MCF 10A (cell line): ENCODE measurements at regions of chr2 and their contacts with region 1.

Region 1: DNA sequence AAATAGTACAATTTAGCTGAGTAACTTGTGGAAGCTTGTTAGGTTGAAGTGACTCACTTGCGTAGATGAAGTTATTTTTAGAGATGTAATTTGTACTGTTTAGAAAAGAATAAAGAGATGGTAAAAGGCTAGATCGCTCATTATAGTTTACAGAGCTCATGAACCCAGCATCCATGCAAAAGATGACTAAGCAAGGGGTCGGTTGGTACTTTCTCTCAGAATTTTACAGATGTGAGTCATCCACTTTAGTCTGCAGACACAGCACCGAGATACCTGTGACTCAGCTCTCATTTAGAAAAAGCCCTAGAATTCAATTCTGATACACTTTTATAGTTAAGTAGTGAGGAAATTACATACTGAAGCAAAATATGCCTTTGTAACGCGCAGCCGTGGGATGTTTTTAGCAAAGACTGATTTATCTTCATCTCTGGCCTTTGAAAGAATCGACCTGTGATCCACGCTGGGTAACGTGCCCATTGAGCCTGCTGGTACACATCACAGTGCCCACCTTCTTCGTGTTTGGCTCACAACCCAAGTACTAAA is 116.5 kb upstream of the FOSL2 start:
- DNase-seq: peak; percentile 94
- H3K4me3 Mint-ChIP-seq: peak overlapping the region; percentile 32
- H3K27ac Mint-ChIP-seq: peak overlapping the region; percentile 88
- H3K4me1 Mint-ChIP-seq: peaks cover 48% of the 10 kb centered on the region
- H3K27me3 Mint-ChIP-seq: no peaks in the 10 kb centered on the region
- CTCF ChIP-seq: no peak

Region 2: GRCh38 chr2:27754138-27754588 is 522.0 kb before region 1 on chr2:
- CTCF ChIA-PET with region 1: interaction called, 5 read pairs
- POLR2A ChIA-PET with region 1: interaction called, 7 read pairs
- intact Hi-C with region 1: loop called (anchors 10 kb)
- DNase-seq: peak; percentile 82
- H3K4me3 Mint-ChIP-seq: peak overlapping the region; percentile 31
- H3K27ac Mint-ChIP-seq: no peak overlapping the region
- H3K4me1 Mint-ChIP-seq: peaks cover 42% of the 10 kb centered on the region
- H3K27me3 Mint-ChIP-seq: no peaks in the 10 kb centered on the region
- CTCF ChIP-seq: peak; percentile 95

Region 3: GRCh38 chr2:27954771-27955383 is 321.3 kb before region 1 on chr2:
- CTCF ChIA-PET with region 1: interaction called, 3 read pairs
- POLR2A ChIA-PET with region 1: interaction called, 14 read pairs
- intact Hi-C with region 1: loop called (anchors 1 kb)
- DNase-seq: peak; percentile 98
- H3K4me3 Mint-ChIP-seq: peak overlapping the region; percentile 2
- H3K27ac Mint-ChIP-seq: peak overlapping the region; percentile 93
- H3K4me1 Mint-ChIP-seq: peaks cover 58% of the 10 kb centered on the region
- H3K27me3 Mint-ChIP-seq: no peaks in the 10 kb centered on the region
- CTCF ChIP-seq: peak; percentile 29

Region 4: DNA sequence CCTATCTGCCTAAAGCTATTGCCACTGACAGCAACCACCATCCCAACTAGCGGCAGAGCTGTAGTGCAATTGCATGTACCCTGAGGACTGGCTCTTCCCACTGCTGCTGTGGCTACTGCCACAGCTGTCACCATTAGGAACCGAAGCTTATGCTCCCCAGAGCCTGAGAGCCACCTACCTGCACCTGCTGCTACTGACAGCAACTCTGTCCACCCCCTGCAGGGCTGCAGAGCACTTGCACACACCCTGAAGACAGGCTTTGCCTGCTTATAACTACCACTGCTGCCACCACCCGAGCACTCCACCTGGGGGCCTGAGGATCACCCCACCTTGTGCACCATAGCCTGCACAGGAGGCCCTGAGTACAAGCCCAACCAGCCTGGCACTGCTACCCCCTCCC is 101.1 kb before region 1 on chr2:
- CTCF ChIA-PET with region 1: interaction called, 3 read pairs
- POLR2A ChIA-PET with region 1: interaction called, 23 read pairs
- intact Hi-C with region 1: no loop called
- DNase-seq: no peak
- H3K4me3 Mint-ChIP-seq: no peak overlapping the region
- H3K27ac Mint-ChIP-seq: no peak overlapping the region
- H3K4me1 Mint-ChIP-seq: peaks cover 17% of the 10 kb centered on the region
- H3K27me3 Mint-ChIP-seq: no peaks in the 10 kb centered on the region
- CTCF ChIP-seq: no peak

Region 5: GRCh38 chr2:28224648-28225472 is 51.3 kb before region 1 on chr2:
- CTCF ChIA-PET with region 1: interaction called, 4 read pairs
- POLR2A ChIA-PET with region 1: interaction called, 92 read pairs
- intact Hi-C with region 1: no loop called
- DNase-seq: peak; percentile 66
- H3K4me3 Mint-ChIP-seq: peak overlapping the region; percentile 41
- H3K27ac Mint-ChIP-seq: peak overlapping the region; percentile 93
- H3K4me1 Mint-ChIP-seq: peaks cover 39% of the 10 kb centered on the region
- H3K27me3 Mint-ChIP-seq: no peaks in the 10 kb centered on the region
- CTCF ChIP-seq: no peak

Region 6: DNA sequence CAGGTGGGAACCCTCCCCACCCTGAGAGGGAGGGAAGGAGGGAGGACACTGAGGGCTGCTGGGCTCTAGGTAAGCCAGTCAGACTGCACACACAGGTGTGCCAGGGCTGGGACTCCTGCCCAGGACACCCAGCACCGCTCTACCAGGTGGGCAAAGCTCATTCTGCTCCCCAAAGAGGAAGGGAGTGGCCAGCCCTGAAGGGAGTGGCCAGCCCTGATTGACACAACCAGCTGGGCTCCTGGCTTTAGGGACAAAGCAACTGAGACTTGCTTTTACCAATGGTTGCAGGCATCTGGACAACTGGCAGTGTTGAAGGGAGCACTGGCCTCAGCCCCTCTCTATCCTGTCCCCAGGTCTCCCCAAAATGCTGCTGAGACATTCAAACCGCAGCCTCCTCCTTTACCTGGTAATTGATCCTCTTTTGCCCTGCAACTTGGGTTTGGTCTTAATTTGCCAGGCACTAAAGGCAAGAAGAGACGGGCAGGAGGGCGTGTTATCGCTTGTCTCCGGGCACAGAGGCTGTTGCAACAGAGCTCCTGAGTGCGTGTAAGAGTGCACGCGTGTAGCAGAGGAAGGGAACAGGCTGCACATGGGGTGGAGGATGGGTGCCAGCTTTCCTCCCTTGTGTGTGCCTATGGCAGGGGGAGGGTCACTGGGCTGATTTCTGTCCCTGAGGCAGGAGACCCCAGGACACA is 102.0 kb after region 1 on chr2:
- CTCF ChIA-PET with region 1: interaction called, 6 read pairs
- POLR2A ChIA-PET with region 1: interaction called, 83 read pairs
- intact Hi-C with region 1: no loop called
- DNase-seq: peak; percentile 93
- H3K4me3 Mint-ChIP-seq: peak overlapping the region; percentile 61
- H3K27ac Mint-ChIP-seq: peak overlapping the region; percentile 70
- H3K4me1 Mint-ChIP-seq: peaks cover 29% of the 10 kb centered on the region
- H3K27me3 Mint-ChIP-seq: no peaks in the 10 kb centered on the region
- CTCF ChIP-seq: no peak

Region 7: DNA sequence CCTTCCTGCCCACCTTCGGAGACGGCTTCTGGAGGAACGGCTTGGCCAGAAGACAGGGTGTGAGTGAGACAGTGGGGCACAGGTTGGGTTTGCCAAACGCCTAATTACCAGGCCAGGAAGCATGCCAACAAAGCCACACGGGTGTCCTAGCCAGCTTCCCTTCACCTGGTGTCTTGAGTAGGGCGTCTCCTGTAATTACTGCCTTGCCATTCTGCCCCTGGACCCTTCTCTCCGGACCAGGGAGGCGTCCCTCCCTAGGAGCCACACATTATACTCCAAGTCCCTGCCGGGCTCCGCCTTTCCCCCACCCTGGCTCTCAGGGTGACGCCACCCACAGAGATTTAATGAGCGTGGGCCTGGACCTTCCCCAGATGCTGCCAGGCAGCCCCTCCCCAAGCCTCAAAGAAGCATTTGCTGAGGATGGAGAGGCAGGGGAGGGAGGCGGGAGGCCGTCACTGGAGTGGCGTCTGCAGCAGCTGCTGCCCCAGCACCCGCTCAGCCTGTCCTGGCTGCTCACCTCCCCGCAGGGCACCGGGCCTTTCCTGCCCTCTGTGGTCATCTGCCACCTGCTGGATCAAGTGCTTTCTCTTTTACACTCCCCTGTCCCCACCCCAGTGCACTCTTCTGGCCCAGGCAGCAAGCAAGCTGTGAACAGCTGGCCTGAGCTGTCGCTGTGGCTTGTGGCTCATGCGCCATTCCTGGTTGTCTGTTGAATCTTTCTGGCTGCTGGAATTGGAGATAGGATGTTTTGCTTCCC is 137.2 kb after region 1 on chr2:
- CTCF ChIA-PET with region 1: interaction called, 4 read pairs
- POLR2A ChIA-PET with region 1: interaction called, 14 read pairs
- intact Hi-C with region 1: no loop called
- DNase-seq: no peak
- H3K4me3 Mint-ChIP-seq: no peak overlapping the region
- H3K27ac Mint-ChIP-seq: peak overlapping the region; percentile 19
- H3K4me1 Mint-ChIP-seq: peaks cover 24% of the 10 kb centered on the region
- H3K27me3 Mint-ChIP-seq: no peaks in the 10 kb centered on the region
- CTCF ChIP-seq: no peak